ENCODE measurements at regions of chr15 and their contacts with region 1.

Region 1: DNA sequence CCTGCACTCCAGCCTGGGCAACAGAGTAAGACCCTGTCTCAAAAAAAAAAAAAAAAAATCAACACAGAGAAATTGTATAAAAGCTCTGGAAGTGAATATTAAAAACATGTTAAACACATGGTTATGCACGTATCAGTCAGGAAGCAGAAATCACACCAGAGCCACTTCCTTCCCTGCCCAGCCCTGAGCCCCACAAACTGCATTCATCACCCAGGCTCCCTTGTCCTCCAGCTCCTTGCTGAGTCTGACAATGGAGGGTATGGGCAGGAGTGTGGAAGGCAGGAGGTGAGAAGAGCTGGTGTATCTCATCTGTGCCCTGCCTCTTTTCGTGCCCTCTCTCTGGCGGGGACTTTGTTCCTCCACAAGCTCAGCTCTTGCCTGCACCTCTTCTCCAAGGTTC is 12.1 kb upstream of the LOXL1 start:
- DNase-seq: peak in 1 of 3 donors; percentile 5
- ATAC-seq: no peak
- H3K4me3 ChIP-seq: no peak overlapping the region
- H3K27ac ChIP-seq: no peak overlapping the region
- H3K4me1 ChIP-seq: no peaks in the 10 kb centered on the region
- H3K27me3 ChIP-seq: no peaks in the 10 kb centered on the region

Region 2: GRCh38 chr15:73717802-73718201 is 196.3 kb before region 1 on chr15:
- intact Hi-C with region 1: loop called in 2 of 4 experiments (anchors 10 kb)
- DNase-seq: peak in 1 of 3 donors; percentile 31
- ATAC-seq: no peak
- H3K4me3 ChIP-seq: no peak overlapping the region
- H3K27ac ChIP-seq: no peak overlapping the region
- H3K4me1 ChIP-seq: peaks cover 2% of the 10 kb centered on the region
- H3K27me3 ChIP-seq: no peaks in the 10 kb centered on the region

Measured in right cardiac atrium (tissue), 5 donors.